B cell (primary cell): ENCODE measurements at regions of chr17 and their contacts with region 1.

Region 1: GRCh38 chr17:17313350-17313991 is 10.3 kb downstream of the NT5M start:
- DNase-seq: peak; percentile 79
- ATAC-seq: peak; percentile 98
- H3K4me3 ChIP-seq: no peak overlapping the region
- H3K4me3 Mint-ChIP-seq: no peak overlapping the region
- H3K27ac ChIP-seq: no peak overlapping the region
- H3K27ac Mint-ChIP-seq: no peak overlapping the region
- H3K4me1 ChIP-seq: peaks cover 0 to 3% of the 10 kb centered on the region in 2 donors
- H3K4me1 Mint-ChIP-seq: no peaks in the 10 kb centered on the region
- H3K27me3 ChIP-seq: no peaks in the 10 kb centered on the region
- H3K27me3 Mint-ChIP-seq: no peaks in the 10 kb centered on the region
- CTCF ChIP-seq: peak; percentile 75

Region 2: GRCh38 chr17:16922386-16923104 is 390.9 kb before region 1 on chr17:
- CTCF ChIA-PET with region 1: no interaction called
- POLR2A ChIA-PET with region 1: no interaction called
- intact Hi-C with region 1: loop called (anchors 2 kb)
- DNase-seq: peak; percentile 48
- ATAC-seq: peak; percentile 44
- H3K4me3 ChIP-seq: no peak overlapping the region
- H3K4me3 Mint-ChIP-seq: no peak overlapping the region
- H3K27ac ChIP-seq: no peak overlapping the region
- H3K27ac Mint-ChIP-seq: peak overlapping the region; percentile 22
- H3K4me1 ChIP-seq: no peaks in the 10 kb centered on the region
- H3K4me1 Mint-ChIP-seq: no peaks in the 10 kb centered on the region
- H3K27me3 ChIP-seq: no peaks in the 10 kb centered on the region
- H3K27me3 Mint-ChIP-seq: no peaks in the 10 kb centered on the region
- CTCF ChIP-seq: peak; percentile 47

Region 3: DNA sequence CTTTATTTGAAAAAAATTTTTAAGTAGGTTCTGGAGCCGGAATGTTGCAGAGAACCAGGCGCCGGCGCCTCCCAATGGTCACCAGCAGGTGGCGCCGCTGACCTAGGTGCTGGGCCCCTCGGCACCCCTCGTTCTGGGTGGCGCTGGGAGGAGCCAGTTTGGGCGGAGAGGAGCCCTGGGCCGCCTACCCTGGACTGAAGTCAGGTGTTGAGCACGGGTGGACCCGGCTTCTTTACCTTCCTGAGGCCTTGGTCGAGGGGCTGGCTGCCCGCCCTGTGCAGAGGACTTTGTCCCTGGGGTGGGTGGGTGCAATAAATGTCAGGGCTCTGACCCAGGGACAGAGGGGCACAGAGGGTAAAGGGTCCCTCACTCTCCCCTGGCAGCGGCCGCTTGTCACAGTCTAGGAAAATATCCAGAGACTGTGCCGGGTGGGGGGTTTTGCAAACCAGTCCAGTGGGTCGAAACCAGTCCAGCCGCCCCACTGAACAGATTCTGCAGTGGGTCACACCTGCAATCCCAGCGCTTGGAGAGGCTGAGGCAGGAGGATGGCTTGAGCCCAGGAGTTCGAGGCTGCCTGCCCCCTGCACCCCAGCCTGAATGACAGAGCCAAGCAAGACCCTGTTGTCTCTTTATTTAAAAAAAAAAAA is 311.5 kb before region 1 on chr17:
- CTCF ChIA-PET with region 1: interaction called, 25 read pairs
- POLR2A ChIA-PET with region 1: no interaction called
- intact Hi-C with region 1: loop called (anchors 1 kb)
- DNase-seq: peak; percentile 83
- ATAC-seq: peak; percentile 92
- H3K4me3 ChIP-seq: no peak overlapping the region
- H3K4me3 Mint-ChIP-seq: no peak overlapping the region
- H3K27ac ChIP-seq: no peak overlapping the region
- H3K27ac Mint-ChIP-seq: no peak overlapping the region
- H3K4me1 ChIP-seq: peaks cover 0 to 8% of the 10 kb centered on the region in 2 donors
- H3K4me1 Mint-ChIP-seq: peaks cover 5% of the 10 kb centered on the region
- H3K27me3 ChIP-seq: no peaks in the 10 kb centered on the region
- H3K27me3 Mint-ChIP-seq: no peaks in the 10 kb centered on the region
- CTCF ChIP-seq: peak; percentile 96

Region 4: DNA sequence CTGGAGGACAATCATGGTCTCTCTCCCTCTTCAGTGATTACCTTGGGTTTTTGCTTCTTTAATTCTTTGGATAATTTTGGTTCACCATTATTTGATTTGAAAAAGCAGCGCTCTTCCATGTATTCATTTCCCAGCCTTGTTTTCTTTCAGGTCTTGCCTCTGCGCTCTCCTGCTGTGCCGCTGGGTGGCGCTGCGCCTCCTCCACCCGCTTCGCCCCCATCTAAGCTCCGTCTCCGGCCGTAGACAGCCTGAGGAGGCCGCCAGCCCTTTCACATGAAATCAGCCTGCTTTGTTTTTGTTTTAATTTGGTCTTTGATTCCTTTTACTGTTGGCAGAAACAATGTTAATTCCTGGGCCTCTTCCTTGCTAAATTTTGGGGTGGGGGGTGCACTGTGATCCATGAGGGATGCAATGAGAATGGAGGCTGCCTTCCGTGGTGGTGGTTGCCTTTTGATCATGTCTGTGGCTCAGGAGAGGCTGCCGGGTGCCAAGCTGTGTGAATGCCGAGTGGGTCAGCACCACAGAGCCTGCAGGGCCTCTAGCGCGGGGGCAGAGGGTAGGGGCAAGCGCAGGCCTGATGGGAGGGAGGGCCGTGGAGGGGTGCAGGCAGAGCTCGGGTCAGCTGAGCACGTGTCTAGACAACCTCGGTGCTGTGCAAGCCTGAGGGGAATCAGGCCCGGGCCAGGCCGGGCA is 171.5 kb before region 1 on chr17:
- CTCF ChIA-PET with region 1: interaction called, 4 read pairs
- POLR2A ChIA-PET with region 1: no interaction called
- intact Hi-C with region 1: loop called (anchors 10 kb)
- DNase-seq: peak; percentile 32
- ATAC-seq: no peak
- H3K4me3 ChIP-seq: no peak overlapping the region
- H3K4me3 Mint-ChIP-seq: no peak overlapping the region
- H3K27ac ChIP-seq: no peak overlapping the region
- H3K27ac Mint-ChIP-seq: no peak overlapping the region
- H3K4me1 ChIP-seq: no peaks in the 10 kb centered on the region
- H3K4me1 Mint-ChIP-seq: peaks cover 1% of the 10 kb centered on the region
- H3K27me3 ChIP-seq: no peaks in the 10 kb centered on the region
- H3K27me3 Mint-ChIP-seq: no peaks in the 10 kb centered on the region
- CTCF ChIP-seq: peak; percentile 64

Region 5: DNA sequence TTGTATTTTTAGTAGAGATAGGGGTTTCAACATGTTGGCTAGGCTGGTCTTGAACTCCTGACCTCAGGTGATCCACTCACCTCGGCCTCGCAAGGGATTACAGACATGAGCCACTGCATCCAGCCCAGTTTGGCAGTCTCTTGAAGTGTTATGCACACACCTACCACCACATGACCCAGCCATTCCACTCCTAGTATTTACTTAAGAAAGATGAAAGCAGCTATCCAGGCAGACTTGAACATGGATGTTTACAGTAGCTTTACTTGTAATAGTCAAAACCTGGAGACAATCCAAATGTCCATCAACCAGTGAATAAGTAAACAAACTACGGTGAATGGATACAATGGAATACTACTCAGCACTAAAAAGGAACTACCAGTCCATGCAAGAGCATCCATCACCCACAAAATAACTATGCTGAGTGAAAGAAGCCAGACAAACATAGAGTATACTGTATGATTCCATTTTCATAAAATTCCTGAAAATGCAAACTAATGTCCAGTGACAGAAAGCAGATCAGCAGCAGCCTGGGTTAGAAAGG is 220.5 kb after region 1 on chr17:
- CTCF ChIA-PET with region 1: no interaction called
- POLR2A ChIA-PET with region 1: no interaction called
- intact Hi-C with region 1: no loop called
- DNase-seq: no peak
- ATAC-seq: no peak
- H3K4me3 ChIP-seq: no peak overlapping the region
- H3K4me3 Mint-ChIP-seq: no peak overlapping the region
- H3K27ac ChIP-seq: no peak overlapping the region
- H3K27ac Mint-ChIP-seq: no peak overlapping the region
- H3K4me1 ChIP-seq: no peaks in the 10 kb centered on the region
- H3K4me1 Mint-ChIP-seq: no peaks in the 10 kb centered on the region
- H3K27me3 ChIP-seq: no peaks in the 10 kb centered on the region
- H3K27me3 Mint-ChIP-seq: no peaks in the 10 kb centered on the region
- CTCF ChIP-seq: no peak

Region 6: GRCh38 chr17:17694169-17695081 is 381.0 kb after region 1 on chr17:
- CTCF ChIA-PET with region 1: no interaction called
- POLR2A ChIA-PET with region 1: interaction called, 10 read pairs
- intact Hi-C with region 1: no loop called
- DNase-seq: peak; percentile 83
- ATAC-seq: peak; percentile 75
- H3K4me3 ChIP-seq: peak overlapping the region; percentile 69 to 90 (median 85)
- H3K4me3 Mint-ChIP-seq: peak overlapping the region; percentile 95
- H3K27ac ChIP-seq: peak overlapping the region; percentile 88 to 94
- H3K27ac Mint-ChIP-seq: peak overlapping the region; percentile 98
- H3K4me1 ChIP-seq: peaks cover 48 to 52% of the 10 kb centered on the region in 2 donors
- H3K4me1 Mint-ChIP-seq: peaks cover 57% of the 10 kb centered on the region
- H3K27me3 ChIP-seq: no peaks in the 10 kb centered on the region
- H3K27me3 Mint-ChIP-seq: no peaks in the 10 kb centered on the region
- CTCF ChIP-seq: no peak